Tibial artery (tissue), 4 donors: ENCODE measurements at regions of chr12 and their contacts with region 1.

Region 1: GRCh38 chr12:46131729-46132469 is 136.9 kb downstream of the SLC38A1 start:
- DNase-seq: no peak
- H3K4me3 ChIP-seq: no peak overlapping the region
- H3K27ac ChIP-seq: no peak overlapping the region
- H3K4me1 ChIP-seq: peaks cover 0 to 4% (median 0%) of the 10 kb centered on the region in 4 donors
- H3K27me3 ChIP-seq: no peaks in the 10 kb centered on the region
- CTCF ChIP-seq: no peak

Region 2: DNA sequence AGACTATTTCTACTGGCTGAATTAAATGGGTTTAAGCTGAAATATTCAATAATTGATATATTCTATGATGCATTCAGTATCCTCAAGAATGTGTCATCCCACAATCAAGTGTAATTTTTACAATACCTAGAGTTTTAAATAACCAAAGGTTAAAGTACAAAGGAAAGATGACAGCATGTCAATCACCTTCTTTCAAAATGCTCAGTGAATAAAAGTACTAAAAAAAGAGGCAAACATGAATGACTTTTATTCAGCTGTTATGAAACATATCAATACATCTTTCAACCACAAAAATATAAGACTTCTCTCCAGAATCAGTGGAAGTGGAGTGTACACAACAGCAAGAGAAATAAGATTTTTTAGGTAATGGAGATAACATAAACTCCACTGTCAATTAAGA is 1327.8 kb before region 1 on chr12:
- intact Hi-C with region 1: no loop called
- DNase-seq: no peak
- H3K4me3 ChIP-seq: no peak overlapping the region
- H3K27ac ChIP-seq: no peak overlapping the region
- H3K4me1 ChIP-seq: no peaks in the 10 kb centered on the region
- H3K27me3 ChIP-seq: no peaks in the 10 kb centered on the region
- CTCF ChIP-seq: no peak

Region 3: DNA sequence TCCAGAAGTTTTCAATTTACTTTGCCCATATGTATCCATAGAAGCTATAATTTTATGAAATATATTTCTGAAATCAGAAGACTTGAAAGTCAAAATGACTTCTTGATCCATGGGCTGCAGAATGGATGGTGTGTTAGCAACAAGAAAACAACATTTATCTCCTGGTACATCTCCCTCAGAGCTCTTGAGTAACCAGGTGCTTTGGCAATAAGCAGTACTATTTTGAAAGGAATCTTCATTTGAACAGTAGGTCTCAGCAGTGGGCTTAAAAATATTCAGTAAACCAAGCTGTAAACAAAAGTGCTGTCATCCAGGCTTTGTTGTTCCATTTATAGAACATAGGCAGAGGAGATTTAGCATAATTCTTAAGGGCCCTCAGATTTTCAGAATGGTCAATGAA is 36.5 kb after region 1 on chr12:
- intact Hi-C with region 1: loop called (anchors 2 kb)
- DNase-seq: no peak
- H3K4me3 ChIP-seq: no peak overlapping the region
- H3K27ac ChIP-seq: no peak overlapping the region
- H3K4me1 ChIP-seq: no peaks in the 10 kb centered on the region
- H3K27me3 ChIP-seq: no peaks in the 10 kb centered on the region
- CTCF ChIP-seq: no peak

Region 4: DNA sequence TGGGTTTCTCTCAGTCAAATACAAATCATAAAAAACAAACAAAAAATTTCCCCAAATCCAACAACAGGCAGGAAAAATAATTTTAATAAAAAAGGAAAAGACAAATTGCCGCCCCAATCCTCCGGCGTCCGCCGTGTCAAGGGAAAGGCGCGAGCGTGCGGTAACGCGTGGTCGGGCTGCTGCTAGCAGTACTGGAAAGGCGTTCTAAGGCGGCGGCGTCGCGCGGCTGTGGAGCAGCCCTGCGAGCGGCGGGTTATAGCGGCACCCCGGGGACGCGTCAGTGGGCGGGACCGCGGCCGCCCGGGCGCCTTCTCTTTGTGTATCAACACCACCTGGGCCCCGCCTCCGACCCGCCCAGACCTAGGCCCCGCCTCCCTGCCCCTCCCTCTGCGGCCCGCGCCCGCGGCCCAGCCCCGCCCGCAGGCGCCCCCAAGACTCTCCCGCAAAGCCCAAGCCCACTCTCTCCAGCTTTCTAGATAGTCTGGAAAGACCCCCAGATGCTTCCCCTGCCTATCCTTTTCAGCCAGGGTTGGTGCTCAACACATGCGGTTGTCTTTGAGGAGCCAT is 240.7 kb after region 1 on chr12 and contains the start of gene SLC38A2:
- intact Hi-C with region 1: no loop called
- DNase-seq: peak; percentile 98 to 99
- H3K4me3 ChIP-seq: peak within 1 kb of the TSS; percentile 88 to 99
- H3K27ac ChIP-seq: peak within 1 kb of the TSS; percentile 96
- H3K4me1 ChIP-seq: peaks cover 2 to 40% (median 25%) of the 10 kb centered on the region in 4 donors
- H3K27me3 ChIP-seq: no peaks in the 10 kb centered on the region
- CTCF ChIP-seq: no peak